ENCODE measurements at regions of chr1 and their contacts with region 1.

Region 1: DNA sequence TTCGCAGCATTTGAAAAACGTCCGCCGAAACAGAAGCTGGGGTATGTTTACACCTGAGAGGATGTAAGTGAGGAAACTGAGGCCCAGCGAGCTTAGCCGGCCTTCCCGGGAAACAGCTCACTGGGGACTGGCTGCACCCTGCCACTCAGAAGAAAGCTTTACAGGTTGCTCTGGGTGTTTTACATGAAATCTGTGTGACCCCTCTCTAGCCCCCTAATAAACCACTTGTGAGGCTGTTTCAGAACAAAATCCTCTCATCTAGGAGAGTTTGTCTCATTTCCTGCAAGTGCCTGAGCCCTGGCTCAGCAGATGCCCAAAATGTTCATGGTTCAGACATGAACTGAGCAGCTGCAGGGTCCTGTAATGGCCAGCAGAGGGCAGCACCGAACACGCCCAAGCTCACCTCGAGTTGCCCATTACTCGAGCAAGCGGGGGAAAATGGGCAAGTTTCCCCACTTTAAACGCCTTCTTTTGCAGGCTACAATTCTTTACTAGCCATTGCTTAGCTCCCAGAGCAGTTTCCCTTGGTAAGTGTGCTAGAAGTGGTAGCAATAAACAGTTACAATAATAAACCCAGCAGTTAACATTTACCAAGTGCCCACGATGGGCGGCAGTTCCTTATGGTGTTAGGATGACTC is 76.4 kb downstream of the FHAD1 start:
- DNase-seq: peak; percentile 83
- H3K4me3 Mint-ChIP-seq: no peak overlapping the region
- H3K27ac Mint-ChIP-seq: no peak overlapping the region
- H3K4me1 Mint-ChIP-seq: no peaks in the 10 kb centered on the region
- H3K27me3 Mint-ChIP-seq: no peaks in the 10 kb centered on the region
- CTCF ChIP-seq: peak; percentile 87

Region 2: DNA sequence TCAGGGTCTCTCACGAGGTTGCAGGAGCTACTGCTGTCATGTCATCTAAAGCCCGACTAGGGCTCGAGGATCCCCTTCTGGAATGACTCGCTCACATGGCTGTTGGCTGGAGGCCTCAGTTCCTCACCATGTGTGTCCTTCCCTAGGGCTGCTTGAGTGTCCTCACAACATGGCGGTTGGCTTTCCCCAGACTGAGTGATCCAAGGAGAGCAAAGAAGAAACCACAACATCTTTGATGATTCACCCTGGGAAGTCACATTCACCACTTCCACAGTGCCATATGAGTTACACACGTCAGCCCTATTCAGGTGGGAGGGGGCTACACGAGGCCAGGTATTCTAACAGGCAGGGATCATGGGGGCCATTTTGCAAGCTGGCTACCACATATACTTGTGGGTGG is 11.6 kb before region 1 on chr1:
- CTCF ChIA-PET with region 1: interaction called, 10 read pairs
- POLR2A ChIA-PET with region 1: interaction called, 3 read pairs
- intact Hi-C with region 1: no loop called
- DNase-seq: no peak
- H3K4me3 Mint-ChIP-seq: no peak overlapping the region
- H3K27ac Mint-ChIP-seq: no peak overlapping the region
- H3K4me1 Mint-ChIP-seq: no peaks in the 10 kb centered on the region
- H3K27me3 Mint-ChIP-seq: peaks cover 2% of the 10 kb centered on the region
- CTCF ChIP-seq: no peak

Region 3: GRCh38 chr1:15355968-15356621 is 32.6 kb after region 1 on chr1:
- CTCF ChIA-PET with region 1: interaction called, 4 read pairs
- POLR2A ChIA-PET with region 1: interaction called, 4 read pairs
- intact Hi-C with region 1: loop called (anchors 2 kb)
- DNase-seq: peak; percentile 86
- H3K4me3 Mint-ChIP-seq: peak overlapping the region; percentile 40
- H3K27ac Mint-ChIP-seq: peak overlapping the region; percentile 86
- H3K4me1 Mint-ChIP-seq: peaks cover 49% of the 10 kb centered on the region
- H3K27me3 Mint-ChIP-seq: no peaks in the 10 kb centered on the region
- CTCF ChIP-seq: no peak

Region 4: DNA sequence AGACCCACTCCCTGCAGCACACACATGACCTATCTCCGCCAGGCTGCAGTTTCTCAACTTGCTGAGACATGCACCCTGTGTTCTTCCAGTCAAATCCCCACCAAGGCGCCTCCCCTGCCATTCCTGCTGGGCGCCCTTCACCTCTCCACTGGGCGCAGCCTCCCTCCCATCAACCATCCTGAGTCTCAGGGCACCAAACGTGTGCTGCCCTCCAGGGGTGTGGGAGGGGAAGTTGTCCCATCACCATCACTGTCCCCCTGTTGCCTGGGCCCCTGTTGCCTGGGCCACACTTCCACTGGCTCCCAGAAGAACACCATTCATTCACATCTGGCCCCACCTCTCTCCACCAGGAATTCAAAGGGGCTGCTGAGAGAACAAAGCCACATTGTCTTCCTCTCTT is 41.3 kb after region 1 on chr1:
- CTCF ChIA-PET with region 1: no interaction called
- POLR2A ChIA-PET with region 1: no interaction called
- intact Hi-C with region 1: loop called (anchors 2 kb)
- DNase-seq: peak; percentile 53
- H3K4me3 Mint-ChIP-seq: no peak overlapping the region
- H3K27ac Mint-ChIP-seq: no peak overlapping the region
- H3K4me1 Mint-ChIP-seq: no peaks in the 10 kb centered on the region
- H3K27me3 Mint-ChIP-seq: no peaks in the 10 kb centered on the region
- CTCF ChIP-seq: no peak

Region 5: GRCh38 chr1:15409388-15410222 is 86.1 kb after region 1 on chr1 and contains the start of gene EFHD2:
- CTCF ChIA-PET with region 1: interaction called, 11 read pairs
- POLR2A ChIA-PET with region 1: interaction called, 9 read pairs
- intact Hi-C with region 1: loop called (anchors 1 kb)
- DNase-seq: peak; percentile 76
- H3K4me3 Mint-ChIP-seq: peak within 1 kb of the TSS; percentile 88
- H3K27ac Mint-ChIP-seq: peak within 1 kb of the TSS; percentile 96
- H3K4me1 Mint-ChIP-seq: peaks cover 35% of the 10 kb centered on the region
- H3K27me3 Mint-ChIP-seq: no peaks in the 10 kb centered on the region
- CTCF ChIP-seq: no peak
- total RNA-seq, gene EFHD2: 45.1 and 48.5 TPM in 2 replicates

Region 6: DNA sequence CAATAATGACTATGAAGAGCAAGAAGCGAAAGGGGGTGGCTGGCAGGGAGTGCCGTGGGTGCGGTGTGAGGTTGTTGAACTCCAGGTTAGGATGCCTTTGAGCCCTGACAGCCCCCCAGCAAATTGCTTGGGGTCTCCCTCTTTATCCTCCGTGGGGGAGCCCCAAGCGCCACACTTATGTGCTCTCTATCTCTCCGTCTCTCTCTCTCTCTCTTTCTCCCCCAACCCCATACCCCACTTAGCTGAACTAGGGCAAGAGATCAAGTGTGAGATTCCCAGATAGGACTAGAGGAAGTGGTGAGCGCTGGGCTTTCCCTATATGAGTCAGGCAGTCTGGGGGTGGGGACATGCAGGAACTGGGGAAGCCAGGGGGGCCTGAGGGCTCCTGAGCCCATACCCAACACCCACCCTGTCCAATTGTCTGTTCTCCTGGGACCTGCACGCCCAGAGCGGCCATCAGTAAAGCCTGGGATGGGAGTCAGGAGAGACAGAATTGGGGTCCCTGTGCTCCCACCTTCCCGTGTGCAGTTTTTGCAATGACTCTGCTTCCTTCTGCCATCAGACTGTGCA is 94.0 kb after region 1 on chr1:
- CTCF ChIA-PET with region 1: interaction called, 19 read pairs
- POLR2A ChIA-PET with region 1: interaction called, 9 read pairs
- intact Hi-C with region 1: no loop called
- DNase-seq: peak; percentile 91
- H3K4me3 Mint-ChIP-seq: peak overlapping the region; percentile 47
- H3K27ac Mint-ChIP-seq: peak overlapping the region; percentile 79
- H3K4me1 Mint-ChIP-seq: peaks cover 34% of the 10 kb centered on the region
- H3K27me3 Mint-ChIP-seq: no peaks in the 10 kb centered on the region
- CTCF ChIP-seq: no peak

Region 7: GRCh38 chr1:15501208-15502032 is 177.9 kb after region 1 on chr1:
- CTCF ChIA-PET with region 1: interaction called, 5 read pairs
- POLR2A ChIA-PET with region 1: no interaction called
- intact Hi-C with region 1: loop called (anchors 1 kb)
- DNase-seq: peak; percentile 65
- H3K4me3 Mint-ChIP-seq: no peak overlapping the region
- H3K27ac Mint-ChIP-seq: no peak overlapping the region
- H3K4me1 Mint-ChIP-seq: no peaks in the 10 kb centered on the region
- H3K27me3 Mint-ChIP-seq: no peaks in the 10 kb centered on the region
- CTCF ChIP-seq: peak; percentile 53